PC-9 (cell line): ENCODE measurements at regions of chr12 and their contacts with region 1.

Region 1: GRCh38 chr12:65182012-65182739 is 12.8 kb downstream of the LEMD3 start:
- DNase-seq: no peak
- H3K4me3 ChIP-seq: no peak overlapping the region
- H3K27ac ChIP-seq: peak overlapping the region; percentile 11; the same call in 1 of the 2 replicates
- H3K4me1 ChIP-seq: no peaks in the 10 kb centered on the region
- H3K27me3 ChIP-seq: no peaks in the 10 kb centered on the region
- CTCF ChIP-seq: no peak

Region 2: GRCh38 chr12:65278576-65279368 is 96.6 kb after region 1 on chr12 and contains the start of gene MSRB3:
- CTCF ChIA-PET with region 1: no interaction called
- POLR2A ChIA-PET with region 1: interaction called, 10 read pairs
- intact Hi-C with region 1: no loop called
- DNase-seq: peak in 1 of 2 experiments; percentile 51
- H3K4me3 ChIP-seq: peak within 1 kb of the TSS; percentile 82
- H3K27ac ChIP-seq: no peak within 1 kb of the TSS
- H3K4me1 ChIP-seq: peaks cover 4% of the 10 kb centered on the region; the same call in 1 of the 2 replicates
- H3K27me3 ChIP-seq: peaks cover 18% of the 10 kb centered on the region; the same call in 1 of the 2 replicates
- CTCF ChIP-seq: no peak; the same call in 1 of the 2 replicates
- total RNA-seq, gene MSRB3: 0.55 and 1.2 TPM in 2 replicates